Heart left ventricle (tissue), 16 donors: ENCODE measurements at regions of chr13 and their contacts with region 1.

Region 1: DNA sequence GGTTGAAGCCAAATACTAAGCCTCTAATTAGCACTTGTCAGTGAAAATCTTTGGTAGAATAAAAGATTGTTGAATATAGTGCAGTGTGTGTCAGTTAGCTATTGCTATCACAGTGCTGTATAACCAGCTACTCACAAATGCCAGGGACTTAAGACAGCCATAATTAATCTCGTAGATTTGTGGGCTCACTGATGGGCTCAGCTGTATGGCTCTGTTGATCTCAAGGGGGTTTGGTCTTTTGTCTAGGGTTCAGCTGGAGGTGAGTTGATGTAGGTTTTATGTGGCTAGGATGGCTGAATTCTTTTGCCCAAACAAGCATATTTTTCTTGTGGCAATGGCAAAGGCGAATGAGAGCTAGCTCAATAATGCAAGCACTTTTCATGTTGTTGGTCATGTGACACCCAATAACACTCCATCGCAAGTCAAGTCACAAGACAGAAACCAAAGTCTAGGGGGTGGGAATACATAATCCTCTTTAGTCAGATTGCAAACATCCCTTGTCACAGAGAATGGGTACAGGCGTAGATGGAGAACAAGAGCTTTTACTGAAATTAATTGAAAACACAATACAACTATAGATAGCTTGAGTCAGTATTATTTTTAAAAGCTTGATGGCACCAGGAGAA is 121.7 kb upstream of the EDNRB start:
- DNase-seq: no peak
- ATAC-seq: no peak
- H3K4me3 ChIP-seq: no peak overlapping the region
- H3K27ac ChIP-seq: no peak overlapping the region
- H3K4me1 ChIP-seq: no peaks in the 10 kb centered on the region
- H3K27me3 ChIP-seq: no peaks in the 10 kb centered on the region
- CTCF ChIP-seq: no peak
- POLR2A ChIP-seq: no peak

Region 2: DNA sequence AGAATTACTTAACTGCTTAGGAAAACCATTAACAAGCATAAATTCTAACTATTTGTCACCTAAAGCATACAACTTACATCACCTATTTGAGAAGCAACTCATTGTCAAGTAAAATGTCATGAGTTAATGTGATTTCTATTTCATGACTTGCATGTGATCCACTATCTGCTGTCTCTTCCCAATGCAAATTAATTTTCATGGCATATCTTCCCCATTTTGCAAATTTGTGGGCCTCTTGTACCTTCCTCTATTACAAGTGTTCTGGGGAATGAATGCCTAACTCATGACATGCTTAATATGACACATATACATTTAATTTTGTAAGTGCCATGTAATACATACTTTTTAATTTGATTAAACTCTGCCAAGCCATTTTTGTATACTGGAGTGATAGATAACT is 40.6 kb before region 1 on chr13:
- intact Hi-C with region 1: loop called in 1 of 10 experiments (anchors 5 kb)
- DNase-seq: no peak
- ATAC-seq: no peak
- H3K4me3 ChIP-seq: no peak overlapping the region
- H3K27ac ChIP-seq: no peak overlapping the region
- H3K4me1 ChIP-seq: no peaks in the 10 kb centered on the region
- H3K27me3 ChIP-seq: no peaks in the 10 kb centered on the region
- CTCF ChIP-seq: no peak
- POLR2A ChIP-seq: no peak